Heart left ventricle (tissue), 16 donors: ENCODE measurements at regions of chr1 and their contacts with region 1.

Region 1: DNA sequence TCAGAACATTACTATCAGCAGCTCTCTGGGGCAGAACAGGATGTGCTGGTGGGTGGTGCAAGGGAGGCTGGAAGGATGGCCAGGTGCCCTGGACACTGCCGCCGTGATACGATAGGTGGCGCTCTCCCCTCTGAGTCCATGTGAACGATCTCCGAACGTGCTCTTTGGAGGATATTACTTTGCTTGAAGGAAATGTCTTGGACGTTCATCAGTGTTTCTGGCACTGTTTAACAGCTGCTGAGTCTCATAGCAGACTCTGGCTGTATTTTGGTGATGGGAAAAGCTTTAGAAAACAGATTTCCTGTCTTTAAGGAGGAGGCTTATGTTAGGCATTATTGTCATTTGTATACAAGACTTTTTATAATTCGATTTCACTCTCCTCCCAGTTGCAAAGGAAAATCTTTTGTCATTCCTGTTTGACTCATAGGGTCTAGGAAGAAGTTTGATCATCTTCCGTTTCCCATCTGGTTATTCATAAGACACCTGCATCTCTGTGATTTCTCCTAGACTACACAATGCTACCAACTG is 386.2 kb upstream of the ADGRL2 start:
- DNase-seq: peak; percentile 78 to 85 (median 80)
- ATAC-seq: peak; percentile 89 to 93 (median 92)
- H3K4me3 ChIP-seq: peak overlapping the region in 1 of 12 donors; percentile 17
- H3K27ac ChIP-seq: peak overlapping the region in 10 of 12 donors; percentile 29 to 69 (median 55)
- H3K4me1 ChIP-seq: peaks cover 0 to 35% (median 18%) of the 10 kb centered on the region in 12 donors
- H3K27me3 ChIP-seq: no peaks in the 10 kb centered on the region
- CTCF ChIP-seq: peak; percentile 76 to 95 (median 91)
- POLR2A ChIP-seq: no peak

Region 2: GRCh38 chr1:81314513-81315233 is 99.9 kb before region 1 on chr1:
- intact Hi-C with region 1: loop called in 6 of 10 experiments (anchors 2 to 10 kb)
- DNase-seq: no peak
- ATAC-seq: peak; percentile 49 to 62 (median 57)
- H3K4me3 ChIP-seq: no peak overlapping the region
- H3K27ac ChIP-seq: peak overlapping the region in 9 of 12 donors; percentile 0 to 77 (median 36)
- H3K4me1 ChIP-seq: peaks cover 0 to 28% (median 11%) of the 10 kb centered on the region in 12 donors
- H3K27me3 ChIP-seq: no peaks in the 10 kb centered on the region
- CTCF ChIP-seq: no peak
- POLR2A ChIP-seq: no peak

Region 3: GRCh38 chr1:81493102-81493869 is 78.7 kb after region 1 on chr1:
- intact Hi-C with region 1: loop called in 2 of 10 experiments (anchors 5 to 10 kb)
- DNase-seq: no peak
- ATAC-seq: peak; percentile 91 to 98 (median 96)
- H3K4me3 ChIP-seq: no peak overlapping the region
- H3K27ac ChIP-seq: peak overlapping the region; percentile 14 to 87 (median 78)
- H3K4me1 ChIP-seq: peaks cover 3 to 36% (median 19%) of the 10 kb centered on the region in 12 donors
- H3K27me3 ChIP-seq: no peaks in the 10 kb centered on the region
- CTCF ChIP-seq: no peak
- POLR2A ChIP-seq: no peak

Region 4: DNA sequence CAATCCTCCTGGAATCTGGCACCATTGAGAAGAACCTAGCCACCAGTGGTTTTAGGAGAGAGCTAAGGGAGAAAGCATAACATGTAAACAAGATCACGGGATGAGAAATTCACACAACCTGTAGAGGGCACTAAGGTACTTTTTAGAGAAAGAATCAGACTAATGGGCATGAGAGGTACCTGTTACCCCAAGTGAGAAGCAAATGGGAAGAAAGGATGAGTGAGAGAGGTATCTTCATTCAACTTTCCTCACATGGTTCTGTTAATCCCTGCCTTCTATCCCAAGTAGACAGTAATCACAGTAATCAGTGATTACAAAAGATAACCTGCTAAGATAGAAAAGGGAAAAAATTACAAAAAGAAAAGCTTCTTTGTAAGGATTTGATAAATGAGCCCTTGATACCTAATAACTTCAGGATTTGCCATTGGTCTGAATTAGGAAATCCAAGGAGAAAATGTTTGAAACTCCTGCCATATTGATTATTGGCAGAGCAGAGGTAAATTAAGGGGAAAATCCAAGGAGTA is 135.1 kb after region 1 on chr1:
- intact Hi-C with region 1: loop called in 2 of 10 experiments (anchors 10 kb)
- DNase-seq: no peak
- ATAC-seq: peak; percentile 58 to 88 (median 70)
- H3K4me3 ChIP-seq: no peak overlapping the region
- H3K27ac ChIP-seq: no peak overlapping the region
- H3K4me1 ChIP-seq: peaks cover 0 to 20% (median 0%) of the 10 kb centered on the region in 12 donors
- H3K27me3 ChIP-seq: no peaks in the 10 kb centered on the region
- CTCF ChIP-seq: peak; percentile 28 to 64 (median 50)
- POLR2A ChIP-seq: no peak

Region 5: GRCh38 chr1:81760477-81761097 is 346.0 kb after region 1 on chr1:
- intact Hi-C with region 1: loop called in 6 of 10 experiments (anchors 5 to 10 kb)
- DNase-seq: no peak
- ATAC-seq: no peak
- H3K4me3 ChIP-seq: no peak overlapping the region
- H3K27ac ChIP-seq: no peak overlapping the region
- H3K4me1 ChIP-seq: peaks cover 0 to 15% (median 3%) of the 10 kb centered on the region in 12 donors
- H3K27me3 ChIP-seq: no peaks in the 10 kb centered on the region
- CTCF ChIP-seq: peak in 10 of 12 donors; percentile 17 to 63 (median 54)
- POLR2A ChIP-seq: no peak